ENCODE measurements at regions of chr15 and their contacts with region 1.

Region 1: DNA sequence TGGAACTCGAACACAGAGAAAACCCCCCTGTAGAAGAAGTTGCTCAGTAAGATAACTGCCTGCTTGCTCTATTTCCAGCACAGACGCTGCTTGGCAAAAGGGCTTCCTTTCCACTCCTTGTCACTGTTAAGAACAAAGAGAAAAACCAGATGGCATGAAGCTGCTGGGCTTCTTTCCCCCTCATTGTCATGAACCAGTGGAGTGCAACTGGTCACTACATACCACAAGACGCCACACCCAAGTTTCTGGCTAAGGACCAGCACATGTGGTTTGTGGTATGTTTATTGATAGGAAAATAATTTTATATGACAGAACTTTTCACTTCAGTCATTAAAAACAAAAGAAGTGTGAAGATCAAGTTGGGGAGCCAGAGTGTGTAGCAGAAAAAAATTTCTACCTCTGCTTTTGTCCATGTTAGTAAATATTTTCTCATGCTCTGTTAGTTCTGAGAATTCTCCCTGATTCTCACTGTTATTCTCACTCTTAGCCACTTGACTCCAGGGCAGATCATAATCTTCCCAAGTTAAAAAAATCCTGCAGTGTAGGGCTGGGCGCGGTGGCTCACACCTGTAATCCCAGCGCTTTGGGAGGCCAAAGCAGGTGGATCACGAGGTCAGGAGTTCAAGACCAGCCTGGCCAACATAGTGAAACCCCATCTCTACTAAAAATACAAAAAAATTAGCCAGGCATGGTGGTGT is 37.9 kb downstream of the CLK3 start:
- DNase-seq: no peak
- CTCF ChIP-seq: no peak

Region 2: GRCh38 chr15:74573987-74574386 is 79.6 kb before region 1 on chr15:
- CTCF ChIA-PET with region 1: no interaction called
- POLR2A ChIA-PET with region 1: no interaction called
- DNase-seq: no peak
- CTCF ChIP-seq: no peak

Region 3: DNA sequence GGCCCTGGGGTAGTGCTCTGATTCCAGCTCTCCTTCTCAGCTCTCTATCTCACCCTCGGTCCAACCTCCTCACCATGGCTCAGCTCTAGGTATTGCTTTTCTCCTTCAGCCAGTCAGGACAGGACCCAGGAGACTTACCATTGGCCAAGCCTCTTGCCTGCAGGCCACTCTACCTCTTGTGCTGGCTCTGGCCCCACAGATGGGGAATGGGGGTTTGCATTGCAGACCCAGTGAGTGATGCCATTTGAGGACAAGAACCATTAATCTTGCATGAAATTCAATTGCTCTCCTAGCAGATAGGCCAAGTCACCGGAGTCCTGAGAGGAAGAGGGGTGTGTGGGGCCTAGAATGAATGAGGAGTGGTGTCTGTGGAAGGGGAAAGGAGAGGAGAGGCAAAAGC is 309.1 kb after region 1 on chr15:
- CTCF ChIA-PET with region 1: no interaction called
- POLR2A ChIA-PET with region 1: interaction called, 10 read pairs
- DNase-seq: no peak
- CTCF ChIP-seq: no peak

Measured in GM10248 (cell line).